A673 (cell line): ENCODE measurements at regions of chr2 and their contacts with region 1.

Region 1: DNA sequence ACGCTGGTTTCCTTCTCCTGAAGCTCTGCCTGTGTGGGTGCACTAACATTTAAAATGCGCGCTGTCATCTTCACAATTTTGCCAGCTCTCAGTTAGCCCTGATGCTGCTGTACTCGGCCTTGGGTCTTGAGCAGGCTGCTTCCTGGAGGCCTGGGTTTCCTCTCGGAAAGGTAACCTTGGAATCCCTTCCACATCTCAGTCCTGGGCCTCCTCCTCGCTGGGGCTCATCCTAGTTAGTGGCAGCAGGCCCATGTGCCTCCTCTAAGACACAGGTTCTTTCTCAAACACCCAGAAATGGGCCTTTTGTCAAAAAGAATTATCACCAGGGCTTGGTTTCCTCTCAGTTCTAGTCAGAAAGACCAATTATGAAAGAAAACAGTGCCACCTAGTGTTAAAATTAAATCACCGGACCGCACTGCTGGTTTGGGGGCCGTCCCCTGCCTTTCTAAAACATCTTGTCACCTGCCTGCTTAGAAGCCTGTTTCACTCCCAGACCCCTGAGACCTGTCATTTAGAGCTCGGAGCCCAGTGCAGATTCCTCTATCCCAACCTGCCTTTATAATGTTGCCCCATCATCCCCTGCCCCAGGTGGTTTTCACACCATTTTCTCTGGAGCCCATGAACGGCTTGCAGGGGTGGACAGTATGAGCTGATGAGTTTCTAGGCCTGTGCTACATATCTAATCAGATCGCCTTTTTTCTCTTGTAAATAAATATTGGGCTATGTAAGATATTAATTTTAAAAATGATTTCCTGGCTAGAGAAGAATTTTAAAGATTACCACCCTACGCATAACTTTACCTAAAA is 42.4 kb downstream of the HK2 start:
- DNase-seq: peak; percentile 71
- H3K4me3 ChIP-seq: no peak overlapping the region
- H3K27ac ChIP-seq: no peak overlapping the region
- H3K4me1 ChIP-seq: no peaks in the 10 kb centered on the region
- H3K27me3 ChIP-seq: no peaks in the 10 kb centered on the region
- CTCF ChIP-seq: peak; percentile 77

Region 2: DNA sequence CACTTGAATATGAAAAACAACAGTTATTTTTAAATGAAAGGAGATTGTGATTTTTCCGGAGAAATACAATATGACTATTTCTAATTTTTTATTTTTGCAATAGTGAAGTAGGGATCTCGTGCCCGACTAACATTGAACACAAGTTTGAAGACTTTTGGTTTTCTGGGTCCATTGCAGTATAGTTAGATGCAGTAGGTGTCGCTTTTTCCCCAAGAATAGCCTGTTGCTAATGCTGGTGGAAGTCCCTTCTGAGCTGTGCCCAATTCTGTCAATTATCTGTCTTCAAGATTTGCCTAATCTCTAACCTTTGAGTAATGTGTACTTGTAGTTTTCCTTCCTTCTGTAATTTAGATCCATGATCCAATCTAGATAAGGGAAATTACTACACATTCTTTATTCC is 185.7 kb before region 1 on chr2:
- CTCF ChIA-PET with region 1: interaction called, 14 read pairs
- POLR2A ChIA-PET with region 1: no interaction called
- intact Hi-C with region 1: loop called (anchors 1 kb)
- DNase-seq: peak; percentile 78
- H3K4me3 ChIP-seq: no peak overlapping the region
- H3K27ac ChIP-seq: no peak overlapping the region
- H3K4me1 ChIP-seq: no peaks in the 10 kb centered on the region
- H3K27me3 ChIP-seq: no peaks in the 10 kb centered on the region
- CTCF ChIP-seq: peak; percentile 82

Region 3: GRCh38 chr2:74715078-74715791 is 161.0 kb before region 1 on chr2:
- CTCF ChIA-PET with region 1: interaction called, 7 read pairs
- POLR2A ChIA-PET with region 1: no interaction called
- intact Hi-C with region 1: loop called (anchors 1 kb)
- DNase-seq: peak; percentile 84
- H3K4me3 ChIP-seq: peak overlapping the region; percentile 48
- H3K27ac ChIP-seq: no peak overlapping the region
- H3K4me1 ChIP-seq: peaks cover 3% of the 10 kb centered on the region
- H3K27me3 ChIP-seq: peaks cover 28% of the 10 kb centered on the region
- CTCF ChIP-seq: peak; percentile 95

Region 4: GRCh38 chr2:75276093-75277055 is 400.1 kb after region 1 on chr2:
- CTCF ChIA-PET with region 1: no interaction called
- POLR2A ChIA-PET with region 1: no interaction called
- intact Hi-C with region 1: no loop called
- DNase-seq: peak; percentile 97
- H3K4me3 ChIP-seq: peak overlapping the region; percentile 13
- H3K27ac ChIP-seq: peak overlapping the region; percentile 76
- H3K4me1 ChIP-seq: peaks cover 35% of the 10 kb centered on the region
- H3K27me3 ChIP-seq: no peaks in the 10 kb centered on the region
- CTCF ChIP-seq: no peak